Activated CD4-positive, alpha-beta memory T cell treated with anti-CD3 and anti-CD28 coated beads for 36 hours (primary cell): ENCODE measurements at regions of chr3 and their contacts with region 1.

Region 1: DNA sequence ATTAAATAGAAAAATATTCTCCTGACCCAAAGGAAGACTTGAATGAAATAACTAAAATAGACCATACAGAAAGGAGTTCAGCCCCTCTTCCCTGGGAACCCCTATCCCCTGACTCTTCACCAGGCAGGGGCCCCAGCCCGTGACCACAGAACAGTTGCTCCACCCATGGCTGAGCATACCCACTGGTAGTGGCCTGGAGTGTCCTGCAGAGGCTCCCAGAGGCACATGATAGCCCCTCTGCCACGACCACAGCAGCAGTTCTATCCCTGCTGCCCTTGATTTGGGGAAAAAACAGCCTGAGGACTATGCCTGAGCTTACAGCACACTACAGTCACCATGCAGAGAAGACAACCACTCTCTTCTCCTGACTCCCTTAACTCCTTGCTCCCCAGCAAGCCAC is 31.8 kb downstream of the TTC14 start:
- DNase-seq: no peak
- H3K4me3 Mint-ChIP-seq: no peak overlapping the region
- H3K27ac Mint-ChIP-seq: no peak overlapping the region
- H3K4me1 Mint-ChIP-seq: peaks cover 5% of the 10 kb centered on the region
- H3K27me3 Mint-ChIP-seq: peaks cover 35% of the 10 kb centered on the region

Region 2: DNA sequence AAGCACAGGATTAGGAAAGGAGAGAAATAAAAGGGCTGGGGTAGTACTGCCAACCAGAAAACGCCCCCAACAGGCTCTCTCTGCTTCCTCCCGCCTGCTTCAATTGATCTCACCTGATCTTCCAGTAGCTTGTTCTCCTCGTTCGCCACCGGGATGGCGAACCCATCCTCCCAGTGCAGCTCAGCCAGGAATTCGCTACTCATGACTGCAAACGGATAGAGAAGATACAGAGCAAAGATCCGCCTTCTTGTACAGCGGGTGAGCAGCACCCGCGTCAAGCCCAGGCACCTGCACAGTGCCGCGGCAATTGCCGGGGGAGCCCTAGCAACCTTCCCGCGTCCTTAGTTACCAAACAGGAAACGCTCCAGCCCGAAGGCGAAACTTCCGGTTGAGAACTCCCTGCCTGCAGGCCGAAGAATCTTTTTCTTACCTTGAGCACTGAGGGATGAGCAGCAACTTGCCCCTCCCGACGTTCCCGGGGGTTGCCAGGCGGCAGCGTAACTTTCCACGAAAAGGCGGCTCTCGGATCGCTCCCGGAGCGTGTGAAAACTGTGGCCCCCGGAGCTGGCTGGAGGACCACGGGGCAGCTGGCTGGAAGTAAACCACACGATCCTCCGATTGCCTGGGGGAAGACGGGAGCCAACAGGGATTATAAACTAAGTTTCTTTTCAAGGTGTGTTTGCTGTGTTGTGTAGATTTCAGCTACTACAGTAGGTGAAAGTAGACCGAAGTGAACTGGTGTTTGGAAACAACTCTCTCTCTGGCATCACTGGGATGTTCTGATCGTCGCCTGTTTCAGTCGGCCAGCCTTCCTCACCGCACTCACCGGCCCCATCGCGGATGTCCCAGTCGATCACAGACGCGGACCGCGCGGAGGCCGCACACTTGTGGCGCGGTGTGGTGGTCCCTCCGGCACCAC is 45.7 kb after region 1 on chr3 and contains the start of gene CCDC39:
- CTCF ChIA-PET with region 1: no interaction called
- POLR2A ChIA-PET with region 1: no interaction called
- intact Hi-C with region 1: loop called (anchors 5 kb)
- DNase-seq: peak; percentile 71
- H3K4me3 Mint-ChIP-seq: peak within 1 kb of the TSS; percentile 75
- H3K27ac Mint-ChIP-seq: no peak within 1 kb of the TSS
- H3K4me1 Mint-ChIP-seq: peaks cover 14% of the 10 kb centered on the region
- H3K27me3 Mint-ChIP-seq: peaks cover 27% of the 10 kb centered on the region
- total RNA-seq, gene CCDC39: not detected

Region 3: GRCh38 chr3:180762875-180763274 is 129.2 kb after region 1 on chr3:
- CTCF ChIA-PET with region 1: no interaction called
- POLR2A ChIA-PET with region 1: no interaction called
- intact Hi-C with region 1: no loop called
- DNase-seq: no peak
- H3K4me3 Mint-ChIP-seq: no peak overlapping the region
- H3K27ac Mint-ChIP-seq: no peak overlapping the region
- H3K4me1 Mint-ChIP-seq: no peaks in the 10 kb centered on the region
- H3K27me3 Mint-ChIP-seq: peaks cover 3% of the 10 kb centered on the region

Region 4: DNA sequence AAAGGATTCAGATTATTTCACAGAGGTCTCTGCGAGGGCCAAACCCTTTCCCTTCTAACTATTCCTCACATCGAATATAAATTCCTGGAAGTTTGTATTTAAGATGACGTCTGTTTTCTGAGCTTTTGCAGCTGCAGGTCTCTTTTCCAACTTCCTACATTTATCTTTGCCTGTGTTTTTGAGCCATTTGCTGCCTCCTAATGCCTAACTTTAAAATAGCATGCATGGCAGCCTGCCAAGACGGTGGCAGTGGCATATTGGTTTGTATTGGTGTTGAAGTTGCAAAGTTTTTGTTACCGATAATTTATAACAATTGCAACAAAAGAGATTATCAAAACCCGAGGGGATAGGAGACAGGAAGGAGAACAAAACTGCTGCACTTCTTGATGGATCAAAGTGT is 542.9 kb after region 1 on chr3:
- CTCF ChIA-PET with region 1: interaction called, 3 read pairs
- POLR2A ChIA-PET with region 1: no interaction called
- intact Hi-C with region 1: loop called (anchors 10 kb)
- DNase-seq: peak; percentile 34
- H3K4me3 Mint-ChIP-seq: no peak overlapping the region
- H3K27ac Mint-ChIP-seq: no peak overlapping the region
- H3K4me1 Mint-ChIP-seq: no peaks in the 10 kb centered on the region
- H3K27me3 Mint-ChIP-seq: no peaks in the 10 kb centered on the region